ENCODE measurements at regions of chr19 and their contacts with region 1.

Region 1: DNA sequence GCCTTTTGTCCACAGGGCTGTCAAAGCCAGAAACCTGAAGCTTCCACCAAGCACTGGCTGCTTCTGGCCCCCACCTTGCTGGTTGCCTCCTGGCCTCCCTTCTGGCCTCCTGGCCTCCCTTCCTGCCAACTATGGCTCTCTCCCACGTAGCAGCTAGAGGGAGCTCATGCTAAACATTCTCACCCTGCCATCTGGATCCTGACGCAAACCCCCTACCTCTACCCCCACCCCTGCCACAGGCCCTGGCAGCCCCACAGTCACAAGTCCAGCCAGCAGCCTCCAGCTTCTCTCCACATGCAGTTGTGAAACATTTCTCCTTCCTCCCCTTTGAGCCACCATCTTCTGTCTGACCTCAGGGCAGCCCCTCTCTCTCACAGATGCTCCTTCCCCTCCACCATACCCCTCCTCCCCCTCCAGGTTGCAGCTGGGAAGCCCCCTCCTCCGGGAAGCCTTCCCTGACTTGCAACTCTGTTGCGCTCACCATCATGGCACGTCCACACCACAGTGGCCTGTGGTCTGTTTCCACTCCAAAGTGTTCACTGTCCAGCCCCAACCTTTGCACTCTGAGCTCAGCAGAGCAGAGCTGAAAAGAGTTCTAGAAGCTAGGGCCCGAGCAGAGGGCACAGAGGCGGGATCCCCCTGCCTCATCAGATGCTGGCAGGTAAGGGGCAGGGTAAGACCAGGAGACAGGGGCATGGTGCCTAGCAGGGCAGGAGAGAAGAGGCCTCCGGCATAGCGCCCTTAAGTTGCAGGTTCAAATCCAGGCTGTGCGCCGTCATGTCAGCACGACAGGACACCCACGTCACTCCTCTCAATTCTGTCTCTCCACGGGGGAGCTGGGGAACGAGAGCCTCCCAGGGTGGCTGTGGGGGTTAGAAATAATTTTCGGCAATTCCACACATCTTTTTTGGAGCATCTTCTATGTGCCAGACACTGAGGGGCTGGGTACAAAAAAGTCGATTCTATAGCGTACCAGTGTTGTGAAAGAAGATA is 7.3 kb downstream of the ADGRL1 start:
- DNase-seq: no peak
- ATAC-seq: no peak
- H3K4me3 ChIP-seq: no peak overlapping the region
- H3K4me3 Mint-ChIP-seq: no peak overlapping the region
- H3K27ac ChIP-seq: no peak overlapping the region
- H3K27ac Mint-ChIP-seq: no peak overlapping the region
- H3K4me1 ChIP-seq: no peaks in the 10 kb centered on the region
- H3K4me1 Mint-ChIP-seq: peaks cover 30% of the 10 kb centered on the region
- H3K27me3 ChIP-seq: no peaks in the 10 kb centered on the region
- H3K27me3 Mint-ChIP-seq: no peaks in the 10 kb centered on the region
- CTCF ChIP-seq: no peak

Region 2: DNA sequence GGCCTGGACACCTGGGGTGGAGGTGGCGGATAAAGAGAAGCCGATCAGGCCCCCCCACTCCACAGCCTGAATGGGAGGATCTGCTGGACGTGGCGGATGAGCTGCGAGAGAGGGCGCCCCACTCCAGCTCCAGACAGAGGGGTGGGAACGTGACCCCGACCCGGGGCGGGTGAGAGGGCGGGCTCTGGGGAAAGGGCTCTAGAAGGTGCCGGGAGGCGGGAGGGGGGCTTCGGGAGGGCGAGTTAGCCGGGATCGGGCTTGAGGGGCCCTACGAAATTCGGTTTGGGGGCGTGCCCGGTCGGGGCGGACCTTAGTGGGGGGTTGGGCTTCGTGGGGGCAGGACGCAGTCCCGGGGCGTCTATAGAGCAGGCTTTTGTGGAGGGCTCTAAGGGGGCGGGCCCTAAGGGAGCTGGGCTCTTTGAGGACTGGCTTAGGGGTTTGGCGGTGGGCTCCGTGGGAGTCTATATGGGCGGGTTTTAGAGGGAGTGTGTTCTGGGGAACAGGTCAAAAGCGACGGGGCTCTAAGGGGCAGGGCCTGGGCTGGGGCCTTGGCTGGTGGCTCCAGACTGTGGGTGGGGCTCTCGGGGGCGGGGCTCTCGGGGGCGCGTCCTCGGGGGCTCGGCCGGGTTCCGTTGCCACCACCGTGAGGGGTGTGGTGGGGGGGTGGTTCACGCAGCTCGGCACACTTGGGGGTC is 325.8 kb before region 1 on chr19:
- CTCF ChIA-PET with region 1: no interaction called
- POLR2A ChIA-PET with region 1: no interaction called
- intact Hi-C with region 1: no loop called
- DNase-seq: peak in 5 of 9 experiments; percentile 41 to 70 (median 60)
- ATAC-seq: peak; percentile 96
- H3K4me3 ChIP-seq: peak overlapping the region; percentile 21 to 30
- H3K4me3 Mint-ChIP-seq: peak overlapping the region; percentile 76
- H3K27ac ChIP-seq: no peak overlapping the region
- H3K27ac Mint-ChIP-seq: no peak overlapping the region
- H3K4me1 ChIP-seq: peaks cover 7% of the 10 kb centered on the region
- H3K4me1 Mint-ChIP-seq: peaks cover 9% of the 10 kb centered on the region
- H3K27me3 ChIP-seq: peaks cover 0 to 8% of the 10 kb centered on the region in 2 experiments
- H3K27me3 Mint-ChIP-seq: peaks cover 9% of the 10 kb centered on the region
- CTCF ChIP-seq: peak; percentile 13

Region 3: DNA sequence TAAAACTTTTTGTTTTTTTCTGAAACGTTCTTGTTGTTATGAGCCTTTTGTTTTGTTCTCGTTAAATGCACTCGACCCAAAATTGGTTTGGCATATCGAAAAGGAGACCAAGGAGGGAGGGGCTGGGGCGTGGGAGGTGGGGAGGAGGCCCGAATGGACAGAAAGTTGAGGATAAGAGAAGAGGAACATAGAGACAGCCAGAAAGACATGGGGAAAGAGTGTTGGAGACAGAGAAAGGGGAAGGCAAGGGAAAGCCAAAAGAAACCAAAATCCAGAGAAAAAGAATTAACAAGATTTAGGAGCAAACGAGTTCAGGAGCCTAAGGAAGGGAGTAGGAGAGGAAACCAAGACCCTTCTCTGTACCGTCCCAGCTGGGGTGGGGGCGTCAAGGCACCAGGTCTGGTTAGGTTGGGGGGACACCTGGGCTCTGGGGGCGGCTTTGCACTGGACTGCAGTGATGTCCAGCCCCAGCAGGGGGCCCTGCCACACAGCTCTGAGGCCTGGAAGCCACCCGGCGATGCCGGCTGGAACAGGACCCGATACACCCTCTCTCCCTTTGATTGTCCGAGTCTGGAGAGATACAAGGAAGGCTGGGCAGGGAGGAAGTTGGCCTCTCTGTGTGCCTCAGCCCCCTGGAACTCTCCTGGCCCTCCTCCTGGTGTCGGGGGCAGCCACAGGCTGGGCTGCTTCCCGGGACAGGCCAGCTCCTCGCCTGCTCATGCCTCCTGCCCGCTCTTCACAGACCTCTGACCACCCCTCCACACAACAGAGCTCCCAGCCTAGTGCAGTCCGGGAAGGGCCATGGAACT is 50.7 kb before region 1 on chr19:
- CTCF ChIA-PET with region 1: interaction called, 4 read pairs
- POLR2A ChIA-PET with region 1: no interaction called
- intact Hi-C with region 1: loop called in 1 of 2 experiments (anchors 1 kb)
- DNase-seq: peak; percentile 31 to 77 (median 59)
- ATAC-seq: peak; percentile 60
- H3K4me3 ChIP-seq: no peak overlapping the region
- H3K4me3 Mint-ChIP-seq: peak overlapping the region; percentile 82
- H3K27ac ChIP-seq: peak overlapping the region; percentile 87 to 94
- H3K27ac Mint-ChIP-seq: peak overlapping the region; percentile 100
- H3K4me1 ChIP-seq: peaks cover 30% of the 10 kb centered on the region
- H3K4me1 Mint-ChIP-seq: peaks cover 38% of the 10 kb centered on the region
- H3K27me3 ChIP-seq: no peaks in the 10 kb centered on the region
- H3K27me3 Mint-ChIP-seq: no peaks in the 10 kb centered on the region
- CTCF ChIP-seq: peak; percentile 30

Region 4: GRCh38 chr19:14487370-14488125 is 288.9 kb after region 1 on chr19:
- CTCF ChIA-PET with region 1: no interaction called
- POLR2A ChIA-PET with region 1: no interaction called
- intact Hi-C with region 1: loop called in 1 of 2 experiments (anchors 5 kb)
- DNase-seq: no peak
- ATAC-seq: no peak
- H3K4me3 ChIP-seq: no peak overlapping the region
- H3K4me3 Mint-ChIP-seq: no peak overlapping the region
- H3K27ac ChIP-seq: no peak overlapping the region
- H3K27ac Mint-ChIP-seq: no peak overlapping the region
- H3K4me1 ChIP-seq: no peaks in the 10 kb centered on the region
- H3K4me1 Mint-ChIP-seq: peaks cover 4% of the 10 kb centered on the region
- H3K27me3 ChIP-seq: no peaks in the 10 kb centered on the region
- H3K27me3 Mint-ChIP-seq: no peaks in the 10 kb centered on the region
- CTCF ChIP-seq: no peak

Measured in CD8-positive, alpha-beta T cell (primary cell).